ENCODE measurements at regions of chr4 and their contacts with region 1.

Region 1: DNA sequence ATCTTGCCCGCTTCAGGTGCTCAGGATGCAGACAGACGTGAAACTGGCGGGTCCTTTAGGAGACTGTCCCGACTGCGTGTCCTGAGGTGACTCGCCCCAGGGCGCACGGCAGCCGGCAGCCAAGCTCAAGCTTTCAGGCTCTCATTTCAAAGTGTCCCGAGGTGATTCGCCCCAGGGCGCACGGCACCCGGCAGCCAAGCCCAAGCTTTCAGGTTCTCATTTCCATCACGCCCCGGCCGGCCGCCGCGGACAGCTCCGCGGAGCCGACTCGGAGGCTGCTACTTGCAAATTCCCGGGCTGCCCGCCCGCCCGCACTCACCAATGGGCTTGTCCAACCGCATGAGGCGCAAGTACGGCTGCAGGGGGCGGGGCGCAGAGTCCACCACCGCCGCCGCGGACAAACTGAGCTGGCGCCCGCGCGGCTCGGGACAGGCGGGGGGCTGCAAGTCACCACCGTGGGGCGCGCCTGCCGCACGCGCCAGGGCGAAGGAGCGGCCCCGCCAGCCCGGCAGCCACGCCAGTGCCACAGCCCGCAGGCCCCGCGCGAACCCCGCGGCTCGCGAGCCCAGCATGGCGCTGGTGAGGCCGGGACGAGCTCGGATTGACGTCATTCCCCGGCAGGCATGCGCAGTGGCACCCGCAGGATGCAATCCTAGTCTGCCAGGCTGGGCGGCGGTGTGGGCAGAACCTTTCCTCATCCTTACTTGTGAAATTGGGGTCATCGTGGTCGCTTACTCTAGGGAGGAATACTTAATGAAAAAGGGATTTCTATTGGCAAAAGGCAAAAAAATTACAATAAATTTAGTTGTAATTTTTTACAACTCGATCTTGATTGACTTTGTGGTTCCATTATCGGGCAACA is at the start of gene COQ2:
- DNase-seq: peak; percentile 95
- ATAC-seq: peak; percentile 91
- H3K4me3 Mint-ChIP-seq: peak within 1 kb of the TSS; percentile 87
- H3K27ac Mint-ChIP-seq: peak within 1 kb of the TSS; percentile 99
- H3K4me1 Mint-ChIP-seq: peaks cover 43% of the 10 kb centered on the region
- H3K27me3 Mint-ChIP-seq: no peaks in the 10 kb centered on the region
- CTCF ChIP-seq: peak; percentile 12
- total RNA-seq, gene COQ2: 18.3 to 20.3 TPM

Region 2: DNA sequence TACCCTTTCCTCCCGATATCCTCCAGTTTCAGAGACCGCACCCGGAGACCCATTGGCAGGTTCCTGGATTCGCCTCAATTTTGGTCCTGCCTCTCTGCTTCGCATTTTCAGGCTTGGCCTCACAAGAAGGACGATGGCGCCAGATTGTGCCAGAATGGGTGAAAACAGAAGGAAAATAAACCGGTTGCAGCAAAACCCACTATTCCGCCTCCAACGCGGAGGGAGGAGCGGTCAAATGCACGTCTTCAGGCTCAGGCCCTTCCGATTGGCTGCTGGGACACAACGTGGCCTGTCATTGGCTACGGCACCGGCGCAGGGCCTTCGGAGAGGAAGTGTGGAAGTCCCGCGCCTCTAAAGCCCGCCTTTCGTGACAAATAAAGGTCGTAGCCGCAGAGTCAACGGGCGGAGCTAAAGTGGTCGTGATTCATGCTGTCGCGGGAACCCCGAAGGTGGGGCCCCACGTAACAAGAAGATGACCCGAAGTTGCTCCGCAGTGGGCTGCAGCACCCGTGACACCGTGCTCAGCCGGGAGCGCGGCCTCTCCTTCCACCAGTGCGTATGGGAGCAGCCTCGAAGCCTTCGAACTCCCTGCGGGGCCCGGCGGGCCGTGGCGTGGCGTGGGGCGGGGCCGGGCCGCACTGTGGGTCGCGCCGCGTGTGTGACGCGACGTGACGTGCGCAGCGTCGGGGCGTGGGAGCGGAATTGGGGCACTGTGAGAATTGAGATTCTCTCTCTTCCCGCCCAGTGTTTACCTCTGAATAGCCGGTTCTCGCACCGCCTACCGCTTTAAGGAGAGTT is 383.9 kb before region 1 on chr4 and contains the start of gene THAP9:
- CTCF ChIA-PET with region 1: interaction called, 6 read pairs
- POLR2A ChIA-PET with region 1: no interaction called
- intact Hi-C with region 1: loop called (anchors 10 kb)
- DNase-seq: peak; percentile 99
- ATAC-seq: peak; percentile 90
- H3K4me3 Mint-ChIP-seq: no peak within 1 kb of the TSS
- H3K27ac Mint-ChIP-seq: no peak within 1 kb of the TSS
- H3K4me1 Mint-ChIP-seq: peaks cover 47% of the 10 kb centered on the region
- H3K27me3 Mint-ChIP-seq: no peaks in the 10 kb centered on the region
- CTCF ChIP-seq: no peak
- total RNA-seq, gene THAP9: 3.5 to 4.4 TPM

Region 3: GRCh38 chr4:83074086-83074704 is 210.2 kb before region 1 on chr4:
- CTCF ChIA-PET with region 1: interaction called, 48 read pairs
- POLR2A ChIA-PET with region 1: interaction called, 3 read pairs
- intact Hi-C with region 1: loop called (anchors 5 kb)
- DNase-seq: peak; percentile 67
- ATAC-seq: peak; percentile 91
- H3K4me3 Mint-ChIP-seq: peak overlapping the region; percentile 45
- H3K27ac Mint-ChIP-seq: peak overlapping the region; percentile 47
- H3K4me1 Mint-ChIP-seq: peaks cover 5% of the 10 kb centered on the region
- H3K27me3 Mint-ChIP-seq: no peaks in the 10 kb centered on the region
- CTCF ChIP-seq: peak; percentile 75

Region 4: DNA sequence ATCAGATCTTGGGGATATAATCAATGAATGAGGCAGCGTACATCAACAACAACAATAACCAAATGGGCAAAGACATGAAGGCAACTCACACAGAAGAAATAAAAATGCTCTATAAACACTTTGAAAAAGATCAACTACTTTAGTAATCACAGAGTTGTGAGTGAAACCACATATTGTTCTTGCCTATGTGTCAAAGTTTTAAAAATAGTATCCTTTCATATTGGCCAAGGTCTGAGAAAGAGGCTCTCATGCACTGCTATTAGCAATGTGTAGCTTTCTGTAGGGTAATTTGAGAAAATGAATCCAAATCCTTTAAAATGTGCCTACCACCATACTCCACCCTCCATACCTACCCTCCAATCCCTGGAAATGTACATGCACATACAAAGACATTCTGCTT is 24.8 kb before region 1 on chr4:
- CTCF ChIA-PET with region 1: interaction called, 18 read pairs
- POLR2A ChIA-PET with region 1: no interaction called
- intact Hi-C with region 1: no loop called
- DNase-seq: no peak
- ATAC-seq: no peak
- H3K4me3 Mint-ChIP-seq: no peak overlapping the region
- H3K27ac Mint-ChIP-seq: no peak overlapping the region
- H3K4me1 Mint-ChIP-seq: peaks cover 2% of the 10 kb centered on the region
- H3K27me3 Mint-ChIP-seq: no peaks in the 10 kb centered on the region
- CTCF ChIP-seq: no peak

Region 5: DNA sequence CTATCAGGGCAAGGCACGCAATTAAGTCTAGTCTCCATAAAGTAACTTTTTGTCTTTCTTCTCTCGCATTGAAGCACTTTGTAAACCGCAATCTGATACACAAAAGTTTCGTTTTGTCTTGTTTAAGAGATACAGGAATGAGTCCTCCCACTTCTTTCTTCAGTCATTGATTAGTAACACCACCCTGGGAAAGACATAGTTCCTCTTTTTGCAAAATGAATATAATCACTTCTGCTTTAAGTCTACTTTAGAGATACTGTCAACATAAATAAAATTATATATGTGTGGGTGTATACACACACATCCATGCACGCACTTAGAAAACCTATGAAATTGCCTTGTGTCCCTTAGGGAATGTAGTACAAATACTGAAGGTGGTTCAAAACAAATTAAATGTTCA is 11.5 kb before region 1 on chr4:
- CTCF ChIA-PET with region 1: interaction called, 17 read pairs
- POLR2A ChIA-PET with region 1: interaction called, 4 read pairs
- intact Hi-C with region 1: no loop called
- DNase-seq: no peak
- ATAC-seq: no peak
- H3K4me3 Mint-ChIP-seq: no peak overlapping the region
- H3K27ac Mint-ChIP-seq: no peak overlapping the region
- H3K4me1 Mint-ChIP-seq: peaks cover 18% of the 10 kb centered on the region
- H3K27me3 Mint-ChIP-seq: no peaks in the 10 kb centered on the region
- CTCF ChIP-seq: no peak

Region 6: GRCh38 chr4:83387753-83388676 is 103.6 kb after region 1 on chr4:
- CTCF ChIA-PET with region 1: interaction called, 47 read pairs
- POLR2A ChIA-PET with region 1: interaction called, 3 read pairs
- intact Hi-C with region 1: no loop called
- DNase-seq: peak; percentile 67
- ATAC-seq: peak; percentile 98
- H3K4me3 Mint-ChIP-seq: no peak overlapping the region
- H3K27ac Mint-ChIP-seq: peak overlapping the region; percentile 53
- H3K4me1 Mint-ChIP-seq: peaks cover 8% of the 10 kb centered on the region
- H3K27me3 Mint-ChIP-seq: no peaks in the 10 kb centered on the region
- CTCF ChIP-seq: peak; percentile 28

Region 7: GRCh38 chr4:83490876-83491450 is 206.5 kb after region 1 on chr4:
- CTCF ChIA-PET with region 1: no interaction called
- POLR2A ChIA-PET with region 1: no interaction called
- intact Hi-C with region 1: no loop called
- DNase-seq: peak; percentile 19
- ATAC-seq: peak; percentile 75
- H3K4me3 Mint-ChIP-seq: no peak overlapping the region
- H3K27ac Mint-ChIP-seq: no peak overlapping the region
- H3K4me1 Mint-ChIP-seq: peaks cover 7% of the 10 kb centered on the region
- H3K27me3 Mint-ChIP-seq: no peaks in the 10 kb centered on the region
- CTCF ChIP-seq: peak; percentile 95

Measured in activated CD8-positive, alpha-beta T cell treated with anti-CD3 and anti-CD28 coated beads for 36 hours (primary cell).